ENCODE measurements at regions of chr19 and their contacts with region 1.

Region 1: GRCh38 chr19:11125994-11126685 is 29.4 kb downstream of the SPC24 start:
- DNase-seq: peak; percentile 56 to 87 (median 79)
- ATAC-seq: peak; percentile 72
- H3K4me3 ChIP-seq: no peak overlapping the region
- H3K4me3 Mint-ChIP-seq: no peak overlapping the region
- H3K27ac ChIP-seq: no peak overlapping the region
- H3K27ac Mint-ChIP-seq: no peak overlapping the region
- H3K4me1 ChIP-seq: no peaks in the 10 kb centered on the region
- H3K4me1 Mint-ChIP-seq: peaks cover 4% of the 10 kb centered on the region
- H3K27me3 ChIP-seq: no peaks in the 10 kb centered on the region
- H3K27me3 Mint-ChIP-seq: no peaks in the 10 kb centered on the region
- CTCF ChIP-seq: peak; percentile 76

Region 2: DNA sequence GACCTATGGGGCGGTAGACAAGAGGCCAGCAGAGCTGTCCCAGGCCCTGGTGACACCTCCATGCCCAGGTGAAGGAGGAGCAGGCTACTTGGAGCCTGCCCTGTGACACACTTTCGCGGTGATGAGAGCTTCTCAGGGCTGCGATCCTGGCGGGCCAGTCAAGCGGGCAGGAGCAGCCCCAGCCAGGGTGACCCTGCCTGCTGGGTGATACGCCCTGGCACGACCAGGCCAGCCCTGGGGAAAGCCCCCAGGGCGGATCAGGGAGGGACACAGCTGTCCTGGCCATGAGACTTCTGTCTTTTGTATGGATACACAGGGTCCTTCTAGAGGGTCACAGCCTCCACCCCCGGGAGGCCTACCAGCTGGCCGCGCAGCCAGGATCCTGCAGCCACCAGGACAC is 395.2 kb before region 1 on chr19:
- CTCF ChIA-PET with region 1: no interaction called
- POLR2A ChIA-PET with region 1: no interaction called
- intact Hi-C with region 1: no loop called
- DNase-seq: peak in 2 of 9 experiments; percentile 37 to 46
- ATAC-seq: no peak
- H3K4me3 ChIP-seq: no peak overlapping the region
- H3K4me3 Mint-ChIP-seq: peak overlapping the region; percentile 12
- H3K27ac ChIP-seq: peak overlapping the region; percentile 32 to 73
- H3K27ac Mint-ChIP-seq: peak overlapping the region; percentile 98
- H3K4me1 ChIP-seq: peaks cover 35% of the 10 kb centered on the region
- H3K4me1 Mint-ChIP-seq: peaks cover 56% of the 10 kb centered on the region
- H3K27me3 ChIP-seq: no peaks in the 10 kb centered on the region
- H3K27me3 Mint-ChIP-seq: no peaks in the 10 kb centered on the region
- CTCF ChIP-seq: no peak

Region 3: GRCh38 chr19:11035441-11036377 is 90.4 kb before region 1 on chr19:
- CTCF ChIA-PET with region 1: interaction called, 119 read pairs
- POLR2A ChIA-PET with region 1: interaction called, 4 read pairs
- intact Hi-C with region 1: loop called (anchors 1 kb)
- DNase-seq: peak; percentile 73 to 92 (median 87)
- ATAC-seq: peak; percentile 96
- H3K4me3 ChIP-seq: no peak overlapping the region
- H3K4me3 Mint-ChIP-seq: no peak overlapping the region
- H3K27ac ChIP-seq: no peak overlapping the region
- H3K27ac Mint-ChIP-seq: no peak overlapping the region
- H3K4me1 ChIP-seq: no peaks in the 10 kb centered on the region
- H3K4me1 Mint-ChIP-seq: peaks cover 4% of the 10 kb centered on the region
- H3K27me3 ChIP-seq: no peaks in the 10 kb centered on the region
- H3K27me3 Mint-ChIP-seq: no peaks in the 10 kb centered on the region
- CTCF ChIP-seq: peak; percentile 72

Region 4: DNA sequence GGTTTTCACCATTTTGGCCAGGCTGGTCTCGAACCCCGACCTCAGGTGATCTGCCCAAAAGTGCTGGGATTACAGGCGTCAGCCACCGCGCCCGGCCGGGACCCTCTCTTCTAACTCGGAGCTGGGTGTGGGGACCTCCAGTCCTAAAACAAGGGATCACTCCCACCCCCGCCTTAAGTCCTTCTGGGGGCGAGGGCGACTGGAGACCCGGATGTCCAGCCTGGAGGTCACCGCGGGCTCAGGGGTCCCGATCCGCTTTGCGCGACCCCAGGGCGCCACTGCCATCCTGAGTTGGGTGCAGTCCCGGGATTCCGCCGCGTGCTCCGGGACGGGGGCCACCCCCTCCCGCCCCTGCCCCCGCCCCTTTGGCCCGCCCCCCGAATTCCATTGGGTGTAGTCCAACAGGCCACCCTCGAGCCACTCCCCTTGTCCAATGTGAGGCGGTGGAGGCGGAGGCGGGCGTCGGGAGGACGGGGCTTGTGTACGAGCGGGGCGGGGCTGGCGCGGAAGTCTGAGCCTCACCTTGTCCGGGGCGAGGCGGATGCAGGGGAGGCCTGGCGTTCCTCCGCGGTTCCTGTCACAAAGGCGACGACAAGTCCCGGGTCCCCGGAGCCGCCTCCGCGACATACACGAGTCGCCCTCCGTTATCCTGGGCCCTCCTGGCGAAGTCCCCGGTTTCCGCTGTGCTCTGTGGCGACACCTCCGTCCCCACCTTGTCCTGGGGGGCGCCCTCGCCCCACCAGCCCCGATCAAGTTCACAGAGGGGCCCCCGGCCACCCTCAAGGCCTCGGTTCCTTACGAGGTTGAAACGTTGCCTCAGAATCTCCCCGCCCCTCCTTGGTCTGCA is 35.9 kb before region 1 on chr19:
- CTCF ChIA-PET with region 1: interaction called, 28 read pairs
- POLR2A ChIA-PET with region 1: no interaction called
- intact Hi-C with region 1: loop called in 1 of 2 experiments (anchors 5 kb)
- DNase-seq: peak; percentile 95 to 98 (median 98)
- ATAC-seq: peak; percentile 84
- H3K4me3 ChIP-seq: peak overlapping the region; percentile 78 to 93
- H3K4me3 Mint-ChIP-seq: peak overlapping the region; percentile 86
- H3K27ac ChIP-seq: peak overlapping the region; percentile 97 to 99
- H3K27ac Mint-ChIP-seq: peak overlapping the region; percentile 96
- H3K4me1 ChIP-seq: peaks cover 44% of the 10 kb centered on the region
- H3K4me1 Mint-ChIP-seq: peaks cover 47% of the 10 kb centered on the region
- H3K27me3 ChIP-seq: no peaks in the 10 kb centered on the region
- H3K27me3 Mint-ChIP-seq: no peaks in the 10 kb centered on the region
- CTCF ChIP-seq: no peak

Region 5: DNA sequence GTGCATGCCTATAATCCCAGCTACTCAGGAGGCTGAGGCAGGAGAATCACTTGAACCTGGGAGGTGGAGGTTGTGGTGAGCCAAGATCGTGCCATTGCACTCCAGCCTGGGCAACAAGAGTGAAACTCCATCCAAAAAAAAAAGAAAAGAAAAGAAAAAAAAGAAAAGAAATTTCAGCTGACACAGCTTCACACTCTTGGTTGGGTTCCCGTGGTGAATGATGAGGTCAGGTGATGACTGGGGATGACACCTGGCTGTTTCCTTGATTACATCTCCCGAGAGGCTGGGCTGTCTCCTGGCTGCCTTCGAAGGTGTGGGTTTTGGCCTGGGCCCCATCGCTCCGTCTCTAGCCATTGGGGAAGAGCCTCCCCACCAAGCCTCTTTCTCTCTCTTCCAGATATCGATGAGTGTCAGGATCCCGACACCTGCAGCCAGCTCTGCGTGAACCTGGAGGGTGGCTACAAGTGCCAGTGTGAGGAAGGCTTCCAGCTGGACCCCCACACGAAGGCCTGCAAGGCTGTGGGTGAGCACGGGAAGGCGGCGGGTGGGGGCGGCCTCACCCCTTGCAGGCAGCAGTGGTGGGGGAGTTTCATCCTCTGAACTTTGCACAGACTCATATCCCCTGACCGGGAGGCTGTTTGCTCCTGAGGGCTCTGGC is 14.9 kb before region 1 on chr19:
- CTCF ChIA-PET with region 1: interaction called, 15 read pairs
- POLR2A ChIA-PET with region 1: no interaction called
- intact Hi-C with region 1: no loop called
- DNase-seq: no peak
- ATAC-seq: no peak
- H3K4me3 ChIP-seq: no peak overlapping the region
- H3K4me3 Mint-ChIP-seq: no peak overlapping the region
- H3K27ac ChIP-seq: no peak overlapping the region
- H3K27ac Mint-ChIP-seq: no peak overlapping the region
- H3K4me1 ChIP-seq: no peaks in the 10 kb centered on the region
- H3K4me1 Mint-ChIP-seq: no peaks in the 10 kb centered on the region
- H3K27me3 ChIP-seq: no peaks in the 10 kb centered on the region
- H3K27me3 Mint-ChIP-seq: no peaks in the 10 kb centered on the region
- CTCF ChIP-seq: no peak

Region 6: DNA sequence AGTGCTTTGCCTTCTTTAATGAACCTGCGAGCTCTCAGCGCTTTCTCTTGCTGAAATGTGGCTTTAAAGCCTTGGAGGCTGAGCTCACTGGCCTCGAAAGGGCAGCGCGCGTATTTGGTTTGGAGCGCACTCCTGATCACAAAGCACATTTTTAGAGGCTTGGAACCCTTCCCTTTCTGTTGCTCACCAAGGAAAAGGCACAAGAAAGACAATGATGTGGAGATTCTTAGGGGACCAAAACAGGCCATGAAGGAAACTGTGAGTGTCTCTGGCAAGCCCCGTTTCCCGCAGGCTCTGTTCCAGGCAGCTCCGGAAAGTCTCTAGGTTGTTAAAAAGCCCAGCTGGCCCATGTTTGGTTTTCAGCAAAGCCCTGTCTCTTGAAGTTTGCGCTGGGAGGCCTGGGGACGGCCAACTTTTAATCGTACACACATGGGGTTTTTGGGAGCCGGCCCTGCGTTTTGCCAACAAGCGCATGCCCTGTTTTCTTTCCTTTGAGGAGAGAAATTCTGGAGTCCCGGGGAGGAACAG is 38.8 kb after region 1 on chr19:
- CTCF ChIA-PET with region 1: interaction called, 12 read pairs
- POLR2A ChIA-PET with region 1: no interaction called
- intact Hi-C with region 1: no loop called
- DNase-seq: no peak
- ATAC-seq: no peak
- H3K4me3 ChIP-seq: no peak overlapping the region
- H3K4me3 Mint-ChIP-seq: no peak overlapping the region
- H3K27ac ChIP-seq: no peak overlapping the region
- H3K27ac Mint-ChIP-seq: no peak overlapping the region
- H3K4me1 ChIP-seq: no peaks in the 10 kb centered on the region
- H3K4me1 Mint-ChIP-seq: no peaks in the 10 kb centered on the region
- H3K27me3 ChIP-seq: no peaks in the 10 kb centered on the region
- H3K27me3 Mint-ChIP-seq: peaks cover 2% of the 10 kb centered on the region
- CTCF ChIP-seq: no peak

Region 7: GRCh38 chr19:11203194-11204075 is 77.3 kb after region 1 on chr19:
- CTCF ChIA-PET with region 1: interaction called, 13 read pairs
- POLR2A ChIA-PET with region 1: no interaction called
- intact Hi-C with region 1: loop called in 1 of 2 experiments (anchors 1 kb)
- DNase-seq: peak in 7 of 9 experiments; percentile 18 to 65 (median 42)
- ATAC-seq: no peak
- H3K4me3 ChIP-seq: no peak overlapping the region
- H3K4me3 Mint-ChIP-seq: no peak overlapping the region
- H3K27ac ChIP-seq: no peak overlapping the region
- H3K27ac Mint-ChIP-seq: no peak overlapping the region
- H3K4me1 ChIP-seq: no peaks in the 10 kb centered on the region
- H3K4me1 Mint-ChIP-seq: no peaks in the 10 kb centered on the region
- H3K27me3 ChIP-seq: no peaks in the 10 kb centered on the region
- H3K27me3 Mint-ChIP-seq: peaks cover 3% of the 10 kb centered on the region
- CTCF ChIP-seq: no peak

Measured in CD8-positive, alpha-beta T cell (primary cell).